CD4-positive, alpha-beta memory T cell (primary cell): ENCODE measurements at regions of chr13 and their contacts with region 1.

Region 1: DNA sequence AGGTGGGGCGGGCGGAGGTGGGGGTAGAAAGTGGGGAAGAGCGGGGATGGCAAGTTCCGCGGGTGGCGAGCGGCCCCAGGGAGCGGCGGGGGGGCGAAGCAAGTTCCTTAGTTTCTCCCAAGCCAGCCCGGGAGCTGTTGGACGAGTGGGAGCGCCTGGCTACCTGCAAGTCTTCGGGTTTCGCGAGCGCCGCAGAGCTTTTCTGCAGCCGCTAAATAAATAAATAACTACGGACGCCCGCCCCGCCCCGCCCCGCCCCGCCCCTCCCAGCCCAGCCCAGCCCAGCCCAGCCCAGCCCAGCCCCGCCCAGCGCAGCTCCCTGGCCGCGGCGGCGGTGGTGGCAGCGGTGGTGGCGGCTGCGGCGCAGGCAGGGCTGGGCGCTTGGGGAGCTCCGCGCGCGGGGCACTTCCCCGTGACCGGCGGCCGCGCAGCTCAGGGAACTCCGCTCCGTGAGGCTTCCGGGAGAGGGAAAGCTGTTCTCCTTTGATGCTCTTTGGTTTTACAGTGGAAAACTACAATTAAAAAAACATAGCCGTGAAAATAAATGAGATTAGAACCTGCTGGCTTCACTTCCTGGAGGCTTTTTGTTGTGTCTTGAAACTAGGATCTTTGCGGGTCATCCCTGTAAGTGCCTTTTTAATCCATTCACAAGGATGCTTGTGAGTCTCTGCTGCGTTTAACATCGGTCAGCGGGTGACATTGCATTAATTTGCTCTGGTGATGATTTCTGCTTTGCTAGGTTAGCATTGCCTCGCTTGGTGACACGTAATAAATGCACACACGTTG is at the start of gene UBE2L5:
- DNase-seq: peak; percentile 68 to 77 (median 71)
- H3K4me3 ChIP-seq: peak within 1 kb of the TSS; percentile 42 to 58
- H3K4me3 Mint-ChIP-seq: peak within 1 kb of the TSS; percentile 81 to 94 (median 88)
- H3K27ac ChIP-seq: peak within 1 kb of the TSS; percentile 1
- H3K27ac Mint-ChIP-seq: peak within 1 kb of the TSS; percentile 78 to 93 (median 87)
- H3K4me1 ChIP-seq: peaks cover 19% of the 10 kb centered on the region
- H3K4me1 Mint-ChIP-seq: peaks cover 13 to 27% (median 18%) of the 10 kb centered on the region in 4 donors
- H3K27me3 ChIP-seq: no peaks in the 10 kb centered on the region
- H3K27me3 Mint-ChIP-seq: no peaks in the 10 kb centered on the region
- total RNA-seq, gene UBE2L5: not detected

Region 2: DNA sequence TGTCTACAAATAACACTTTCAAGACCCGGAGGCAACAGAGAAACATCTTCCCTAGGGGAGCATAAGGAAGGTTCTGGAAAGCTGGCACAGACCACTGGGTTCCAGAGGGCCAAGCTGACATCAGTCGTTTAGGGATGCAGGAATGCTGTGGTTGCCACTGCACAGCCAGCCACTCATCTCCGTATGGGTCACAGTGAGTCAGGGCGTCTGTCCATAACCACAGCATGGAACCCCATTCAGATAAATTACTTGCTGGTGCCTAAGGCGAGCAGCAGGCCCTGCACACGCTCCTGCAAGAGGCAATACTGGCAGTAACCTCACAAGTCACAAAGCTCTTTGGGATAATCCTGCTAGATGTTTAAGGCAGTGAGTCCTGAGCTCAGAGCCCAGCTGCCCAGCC is 430.9 kb before region 1 on chr13:
- CTCF ChIA-PET with region 1: no interaction called
- POLR2A ChIA-PET with region 1: no interaction called
- intact Hi-C with region 1: no loop called
- DNase-seq: no peak
- H3K4me3 ChIP-seq: no peak overlapping the region
- H3K4me3 Mint-ChIP-seq: no peak overlapping the region
- H3K27ac ChIP-seq: no peak overlapping the region
- H3K27ac Mint-ChIP-seq: no peak overlapping the region
- H3K4me1 ChIP-seq: no peaks in the 10 kb centered on the region
- H3K4me1 Mint-ChIP-seq: no peaks in the 10 kb centered on the region
- H3K27me3 ChIP-seq: no peaks in the 10 kb centered on the region
- H3K27me3 Mint-ChIP-seq: peaks cover 0 to 5% of the 10 kb centered on the region in 2 donors

Region 3: GRCh38 chr13:30306762-30307193 is 115.5 kb before region 1 on chr13:
- CTCF ChIA-PET with region 1: interaction called, 3 read pairs
- POLR2A ChIA-PET with region 1: interaction called, 9 read pairs
- intact Hi-C with region 1: loop called (anchors 2 kb)
- DNase-seq: peak; percentile 88 to 92 (median 89)
- H3K4me3 ChIP-seq: peak overlapping the region; percentile 55 to 79
- H3K4me3 Mint-ChIP-seq: peak overlapping the region; percentile 90 to 93 (median 91)
- H3K27ac ChIP-seq: peak overlapping the region; percentile 68
- H3K27ac Mint-ChIP-seq: peak overlapping the region; percentile 75 to 93 (median 90)
- H3K4me1 ChIP-seq: peaks cover 28% of the 10 kb centered on the region
- H3K4me1 Mint-ChIP-seq: peaks cover 25 to 46% (median 30%) of the 10 kb centered on the region in 4 donors
- H3K27me3 ChIP-seq: no peaks in the 10 kb centered on the region
- H3K27me3 Mint-ChIP-seq: no peaks in the 10 kb centered on the region